ENCODE measurements at regions of chr7 and their contacts with region 1.

Region 1: DNA sequence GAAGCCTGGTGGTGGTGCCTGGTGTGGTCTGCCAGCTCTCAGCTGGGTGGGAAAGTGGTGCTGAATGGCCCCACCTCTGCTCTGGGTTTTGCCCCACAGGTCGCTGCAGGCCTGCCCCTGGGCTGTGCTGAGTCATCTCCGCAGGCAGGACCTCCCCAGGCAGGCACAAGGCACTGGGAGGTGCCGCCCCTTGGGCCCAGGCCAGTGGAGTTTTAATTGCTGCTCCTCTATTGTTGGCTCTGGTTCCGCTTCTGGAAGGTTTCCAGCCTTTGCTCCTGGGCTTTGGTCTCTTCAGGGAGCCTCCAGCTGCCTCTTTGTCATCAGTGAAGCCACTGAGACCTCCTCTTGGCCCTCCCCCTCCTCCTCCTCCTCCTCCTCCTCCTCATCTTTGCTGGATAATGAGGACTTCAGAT is 180.3 kb upstream of the GRB10 start:
- DNase-seq: peak; percentile 95 to 99
- H3K4me3 ChIP-seq: peak overlapping the region; percentile 12; the same call in 1 of the 2 replicates
- H3K27ac ChIP-seq: peak overlapping the region; percentile 59
- H3K4me1 ChIP-seq: peaks cover 36% of the 10 kb centered on the region
- H3K27me3 ChIP-seq: no peaks in the 10 kb centered on the region
- CTCF ChIP-seq: no peak

Region 2: GRCh38 chr7:50664461-50664922 is 298.5 kb before region 1 on chr7:
- CTCF ChIA-PET with region 1: no interaction called
- POLR2A ChIA-PET with region 1: no interaction called
- intact Hi-C with region 1: loop called (anchors 1 kb)
- DNase-seq: peak; percentile 81 to 98
- H3K4me3 ChIP-seq: peak overlapping the region; percentile 7; the same call in 1 of the 2 replicates
- H3K27ac ChIP-seq: peak overlapping the region; percentile 74
- H3K4me1 ChIP-seq: peaks cover 29% of the 10 kb centered on the region
- H3K27me3 ChIP-seq: no peaks in the 10 kb centered on the region
- CTCF ChIP-seq: no peak

Region 3: DNA sequence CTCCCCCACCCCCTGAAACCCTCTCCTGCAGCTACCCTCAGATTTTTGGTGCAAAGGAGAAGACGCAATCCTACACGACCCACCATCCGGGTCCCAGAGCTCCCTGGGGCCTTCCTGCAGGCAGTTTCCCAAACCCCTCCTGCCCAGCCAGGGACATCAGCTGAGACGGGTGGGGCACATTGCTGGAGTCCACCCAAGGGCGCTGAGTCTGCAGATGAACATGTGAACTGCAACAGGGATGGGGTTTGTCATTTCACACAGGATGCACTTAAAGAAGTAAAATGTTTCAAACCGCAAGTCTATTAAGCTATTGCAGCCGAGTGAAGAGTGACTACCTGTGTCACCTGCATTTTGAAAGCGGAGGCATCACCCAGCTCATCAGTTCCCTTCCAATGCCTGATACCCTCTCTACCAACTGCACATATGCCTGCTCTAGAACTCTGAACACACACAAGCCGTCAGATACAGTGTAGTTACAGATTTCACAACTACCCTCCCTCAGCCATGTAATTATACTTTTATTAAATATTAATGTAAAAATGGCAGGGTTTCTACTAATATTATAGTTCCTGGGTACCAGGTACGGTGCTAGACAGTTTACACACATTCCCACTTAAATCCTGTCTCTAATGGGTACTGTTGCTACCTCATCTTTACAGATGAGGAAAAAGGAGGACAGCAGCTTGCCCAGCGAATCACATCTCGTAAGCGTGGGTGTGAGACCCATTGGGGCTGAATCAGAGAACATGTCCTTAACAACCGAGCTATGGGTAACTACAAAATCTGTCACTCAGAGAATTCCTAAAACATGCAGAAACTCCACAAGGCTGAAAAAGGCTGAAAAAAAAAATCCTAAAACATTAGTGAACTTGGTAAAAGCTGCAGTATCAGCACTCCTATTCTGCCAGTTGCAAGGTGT is 251.5 kb before region 1 on chr7:
- CTCF ChIA-PET with region 1: no interaction called
- POLR2A ChIA-PET with region 1: no interaction called
- intact Hi-C with region 1: loop called (anchors 2 kb)
- DNase-seq: peak in 1 of 2 experiments; percentile 22
- H3K4me3 ChIP-seq: no peak overlapping the region
- H3K27ac ChIP-seq: no peak overlapping the region
- H3K4me1 ChIP-seq: peaks cover 72% of the 10 kb centered on the region
- H3K27me3 ChIP-seq: no peaks in the 10 kb centered on the region
- CTCF ChIP-seq: no peak

Region 4: GRCh38 chr7:50832744-50833143 is 130.2 kb before region 1 on chr7:
- CTCF ChIA-PET with region 1: no interaction called
- POLR2A ChIA-PET with region 1: no interaction called
- intact Hi-C with region 1: loop called (anchors 2 kb)
- DNase-seq: peak; percentile 61 to 98
- H3K4me3 ChIP-seq: no peak overlapping the region
- H3K27ac ChIP-seq: peak overlapping the region; percentile 49
- H3K4me1 ChIP-seq: peaks cover 49% of the 10 kb centered on the region
- H3K27me3 ChIP-seq: no peaks in the 10 kb centered on the region
- CTCF ChIP-seq: no peak

Region 5: DNA sequence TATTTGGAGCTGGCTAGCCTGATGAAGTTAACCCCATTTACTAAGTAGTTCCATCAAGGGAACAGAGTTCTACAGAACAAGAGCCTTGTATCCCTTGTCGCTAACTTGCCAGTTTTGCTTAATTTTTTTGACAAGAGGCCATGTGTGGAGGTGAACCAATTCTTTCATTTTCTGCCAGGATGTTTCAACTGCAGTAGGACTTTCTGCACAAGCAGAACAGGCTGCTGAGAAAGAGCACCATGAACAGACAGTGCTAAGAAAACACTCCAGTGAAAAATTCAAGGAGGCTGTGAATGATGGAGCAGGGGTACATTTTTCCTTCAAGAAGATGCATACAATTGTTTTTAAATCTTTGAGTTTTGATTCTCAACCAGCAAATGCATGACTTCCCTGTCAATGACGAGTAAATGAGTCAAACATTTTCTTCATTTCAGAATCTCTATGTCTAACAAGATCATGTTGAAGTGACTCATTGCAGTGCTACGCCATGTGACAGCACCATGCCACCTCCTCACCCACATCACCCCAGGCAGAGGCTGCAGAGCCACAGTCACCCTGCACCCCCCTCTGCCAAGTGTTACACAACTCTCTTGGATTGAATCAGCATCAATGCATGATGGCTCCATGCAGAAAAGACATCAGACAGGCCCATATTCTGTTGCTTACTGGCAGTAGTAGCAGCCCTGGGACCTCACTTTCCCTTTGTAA is 160.5 kb after region 1 on chr7:
- CTCF ChIA-PET with region 1: no interaction called
- POLR2A ChIA-PET with region 1: no interaction called
- intact Hi-C with region 1: loop called (anchors 10 kb)
- DNase-seq: peak; percentile 90 to 99
- H3K4me3 ChIP-seq: no peak overlapping the region
- H3K27ac ChIP-seq: peak overlapping the region; percentile 50
- H3K4me1 ChIP-seq: peaks cover 19% of the 10 kb centered on the region
- H3K27me3 ChIP-seq: no peaks in the 10 kb centered on the region
- CTCF ChIP-seq: no peak